A549 (cell line): ENCODE measurements at regions of chr6 and their contacts with region 1.

Region 1: DNA sequence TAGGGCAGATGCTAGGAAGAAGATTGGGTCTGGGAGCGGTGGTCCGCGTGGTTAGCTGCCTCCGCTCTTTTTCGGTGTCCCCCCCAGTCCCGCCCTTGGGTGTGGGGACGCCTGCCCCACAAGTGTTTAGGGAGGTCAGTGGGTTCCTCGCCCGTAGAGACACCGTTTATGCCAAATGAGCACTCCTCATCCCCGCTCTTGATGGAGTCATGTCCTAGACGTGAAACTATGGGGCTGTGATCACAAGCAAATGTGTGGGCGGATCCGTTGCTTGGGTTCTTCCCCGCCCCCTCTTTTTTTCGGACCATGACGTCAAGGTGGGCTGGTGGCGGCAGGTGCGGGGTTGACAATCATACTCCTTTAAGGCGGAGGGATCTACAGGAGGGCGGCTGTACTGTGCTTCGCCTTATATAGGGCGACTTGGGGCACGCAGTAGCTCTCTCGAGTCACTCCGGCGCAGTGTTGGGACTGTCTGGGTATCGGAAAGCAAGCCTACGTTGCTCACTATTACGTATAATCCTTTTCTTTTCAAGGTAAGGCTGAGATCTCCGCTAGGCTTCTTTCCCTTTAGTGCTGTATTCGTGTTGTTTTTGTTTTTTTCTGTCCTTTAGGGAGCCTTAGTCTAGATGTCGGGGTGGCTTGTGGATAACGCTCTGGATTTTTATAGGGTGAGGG is at the start of gene HSP90AB1:
- DNase-seq: peak; percentile 72 to 99
- ATAC-seq: peak; percentile 68 to 77
- H3K4me3 ChIP-seq: peak within 1 kb of the TSS; percentile 90
- H3K27ac ChIP-seq: peak within 1 kb of the TSS; percentile 95 to 99
- H3K4me1 ChIP-seq: peaks cover 38% of the 10 kb centered on the region
- CTCF ChIP-seq: no peak
- EP300 ChIP-seq: no peak
- POLR2A ChIP-seq: peak; percentile 94
- RAD21 ChIP-seq: no peak
- polyA plus RNA-seq, gene HSP90AB1: 1,080 and 1,155 TPM in 2 replicates

Region 2: GRCh38 chr6:44192428-44193041 is 54.3 kb before region 1 on chr6:
- CTCF ChIA-PET with region 1: no interaction called
- POLR2A ChIA-PET with region 1: no interaction called
- DNase-seq: no peak
- ATAC-seq: peak; percentile 39 to 73; a peak in 3 of 6 replicates
- H3K4me3 ChIP-seq: no peak overlapping the region
- H3K27ac ChIP-seq: no peak overlapping the region
- H3K4me1 ChIP-seq: no peaks in the 10 kb centered on the region
- CTCF ChIP-seq: no peak
- EP300 ChIP-seq: no peak
- POLR2A ChIP-seq: no peak
- RAD21 ChIP-seq: no peak

Region 3: GRCh38 chr6:44221291-44221960 is 25.4 kb before region 1 on chr6:
- CTCF ChIA-PET with region 1: interaction called, 9 read pairs
- POLR2A ChIA-PET with region 1: interaction called, 16 read pairs
- DNase-seq: peak; percentile 60 to 87
- ATAC-seq: peak; percentile 47 to 77
- H3K4me3 ChIP-seq: no peak overlapping the region
- H3K27ac ChIP-seq: peak overlapping the region; percentile 67 to 98; a peak in 5 of 6 replicates
- H3K4me1 ChIP-seq: peaks cover 68% of the 10 kb centered on the region
- CTCF ChIP-seq: peak; percentile 45; the same call in 2 of the 3 replicates
- EP300 ChIP-seq: no peak
- POLR2A ChIP-seq: no peak
- RAD21 ChIP-seq: peak; percentile 47 to 52; a peak in 4 of 5 replicates

Region 4: GRCh38 chr6:44257025-44257752 is 10.4 kb after region 1 on chr6 and contains the start of gene SLC35B2:
- CTCF ChIA-PET with region 1: interaction called, 29 read pairs
- POLR2A ChIA-PET with region 1: interaction called, 38 read pairs
- DNase-seq: peak; percentile 48 to 55
- ATAC-seq: peak; percentile 48 to 54
- H3K4me3 ChIP-seq: peak within 1 kb of the TSS; percentile 96
- H3K27ac ChIP-seq: peak within 1 kb of the TSS; percentile 93 to 99
- H3K4me1 ChIP-seq: peaks cover 26% of the 10 kb centered on the region
- CTCF ChIP-seq: peak; percentile 80
- EP300 ChIP-seq: no peak
- POLR2A ChIP-seq: peak; percentile 51
- RAD21 ChIP-seq: no peak
- polyA plus RNA-seq, gene SLC35B2: 44.5 and 61.4 TPM in 2 replicates